Common myeloid progenitor, CD34-positive (primary cell): ENCODE measurements at regions of chr1 and their contacts with region 1.

Region 1: DNA sequence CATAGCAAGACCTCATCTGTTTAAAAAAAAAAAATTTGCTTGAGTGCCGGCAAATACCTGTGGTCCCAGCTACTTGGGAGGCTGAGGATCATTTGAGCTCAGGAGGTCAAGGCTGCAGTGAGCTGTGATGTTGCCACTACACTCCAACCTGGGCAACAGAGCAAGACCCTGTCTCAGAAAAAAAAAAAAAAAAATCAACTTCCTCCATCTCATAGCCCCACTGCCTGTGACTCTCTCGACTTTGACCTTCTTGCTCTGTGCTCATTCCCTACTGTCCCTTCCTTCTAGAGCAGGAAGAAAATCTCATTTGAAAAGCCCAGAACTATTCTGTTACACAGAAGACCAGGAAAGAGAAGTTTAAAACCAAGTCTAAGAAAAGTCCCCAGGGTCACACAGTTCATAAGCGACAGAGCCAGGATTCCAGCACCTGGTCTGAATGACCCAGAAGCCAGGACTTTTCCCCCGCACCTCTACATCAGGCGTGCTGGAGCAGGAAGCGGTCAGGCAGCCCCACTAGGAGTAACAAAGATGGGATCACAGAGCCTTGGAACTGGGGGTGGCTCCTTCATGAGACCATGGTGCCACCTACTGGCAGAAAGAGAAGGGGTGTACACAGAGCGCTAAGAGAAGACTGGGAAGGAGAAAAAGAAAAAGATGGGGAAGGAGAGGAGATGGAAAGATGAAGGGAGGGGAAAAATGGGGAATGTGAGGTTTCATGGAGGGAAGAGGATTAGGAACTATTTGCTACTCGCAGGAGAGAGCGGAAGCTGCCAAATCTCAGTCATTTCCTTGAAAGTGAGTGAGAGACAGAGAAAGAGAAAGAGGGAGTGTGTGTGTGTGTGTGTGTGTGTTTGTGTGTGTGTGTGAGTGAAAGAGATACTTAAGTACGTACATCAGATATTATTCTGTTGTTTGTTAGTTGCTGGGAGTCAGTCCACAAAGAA is 3.1 kb upstream of the P3R3URF start:
- DNase-seq: peak; percentile 65 to 72 (median 67)
- H3K4me3 ChIP-seq: peak overlapping the region in 3 of 7 experiments; percentile 22 to 62 (median 50)
- H3K27ac ChIP-seq: no peak overlapping the region
- H3K4me1 ChIP-seq: peaks cover 0 to 14% (median 7%) of the 10 kb centered on the region in 4 experiments
- H3K27me3 ChIP-seq: no peaks in the 10 kb centered on the region

Region 2: DNA sequence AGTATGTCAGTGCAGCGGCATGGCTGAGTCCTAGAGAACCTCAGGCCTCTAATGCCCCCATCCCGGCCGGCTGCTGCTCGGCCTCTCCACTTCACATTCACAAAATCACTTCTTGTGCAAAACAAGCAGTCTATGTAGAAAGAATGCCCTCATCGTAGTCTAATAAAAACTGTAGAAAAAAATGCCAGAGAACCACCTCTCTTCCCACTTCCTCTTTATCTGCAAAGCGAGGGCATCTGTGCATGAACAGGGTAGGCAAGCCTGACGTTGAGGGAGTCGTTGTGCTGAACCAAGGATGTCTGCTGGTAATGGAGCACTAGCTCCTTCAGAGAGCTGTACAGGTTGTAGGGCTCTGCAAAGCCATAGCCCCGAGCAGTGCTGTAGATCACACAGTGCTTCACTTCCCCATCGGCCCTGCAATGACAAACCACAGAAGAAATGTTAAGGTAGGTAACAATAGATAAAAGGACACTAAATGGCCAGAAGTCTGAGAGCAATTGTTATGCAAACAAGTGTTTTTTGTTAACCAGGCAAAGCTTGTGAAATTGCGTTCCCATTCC is 135.9 kb before region 1 on chr1:
- CTCF ChIA-PET with region 1: interaction called, 167 read pairs
- POLR2A ChIA-PET with region 1: no interaction called
- DNase-seq: peak; percentile 29 to 76 (median 67)
- H3K4me3 ChIP-seq: peak overlapping the region in 1 of 7 experiments; percentile 24
- H3K27ac ChIP-seq: no peak overlapping the region
- H3K4me1 ChIP-seq: peaks cover 0 to 30% (median 12%) of the 10 kb centered on the region in 4 experiments
- H3K27me3 ChIP-seq: no peaks in the 10 kb centered on the region

Region 3: GRCh38 chr1:46166521-46167462 is 12.6 kb before region 1 on chr1:
- CTCF ChIA-PET with region 1: interaction called, 12 read pairs
- POLR2A ChIA-PET with region 1: no interaction called
- DNase-seq: peak in 2 of 3 donors; percentile 78 to 80
- H3K4me3 ChIP-seq: peak overlapping the region; percentile 40 to 87 (median 75)
- H3K27ac ChIP-seq: no peak overlapping the region
- H3K4me1 ChIP-seq: peaks cover 0 to 15% (median 13%) of the 10 kb centered on the region in 4 experiments
- H3K27me3 ChIP-seq: peaks cover 0 to 11% (median 0%) of the 10 kb centered on the region in 5 experiments